IMR-90 (cell line): ENCODE measurements at regions of chr2 and their contacts with region 1.

Region 1: GRCh38 chr2:104236491-104236890 is 617.4 kb upstream of the POU3F3 start:
- DNase-seq: no peak
- ATAC-seq: no peak
- H3K4me3 ChIP-seq: no peak overlapping the region
- H3K27ac ChIP-seq: no peak overlapping the region
- H3K4me1 ChIP-seq: no peaks in the 10 kb centered on the region
- H3K27me3 ChIP-seq: no peaks in the 10 kb centered on the region
- CTCF ChIP-seq: no peak
- POLR2A ChIP-seq: no peak
- RAD21 ChIP-seq: no peak

Region 2: GRCh38 chr2:104200533-104201168 is 35.8 kb before region 1 on chr2:
- CTCF ChIA-PET with region 1: no interaction called
- POLR2A ChIA-PET with region 1: no interaction called
- dilution Hi-C with region 1: no loop called
- in situ Hi-C with region 1: no loop called
- intact Hi-C with region 1: loop called (anchors 1 kb)
- DNase-seq: no peak
- ATAC-seq: no peak
- H3K4me3 ChIP-seq: no peak overlapping the region
- H3K27ac ChIP-seq: no peak overlapping the region
- H3K4me1 ChIP-seq: no peaks in the 10 kb centered on the region
- H3K27me3 ChIP-seq: no peaks in the 10 kb centered on the region
- CTCF ChIP-seq: no peak
- POLR2A ChIP-seq: no peak
- RAD21 ChIP-seq: no peak

Region 3: GRCh38 chr2:104262714-104263113 is 26.2 kb after region 1 on chr2:
- CTCF ChIA-PET with region 1: no interaction called
- POLR2A ChIA-PET with region 1: no interaction called
- dilution Hi-C with region 1: no loop called
- in situ Hi-C with region 1: no loop called
- intact Hi-C with region 1: loop called (anchors 2 kb)
- DNase-seq: no peak
- ATAC-seq: no peak
- H3K4me3 ChIP-seq: no peak overlapping the region
- H3K27ac ChIP-seq: no peak overlapping the region
- H3K4me1 ChIP-seq: no peaks in the 10 kb centered on the region
- H3K27me3 ChIP-seq: no peaks in the 10 kb centered on the region
- CTCF ChIP-seq: no peak
- POLR2A ChIP-seq: no peak
- RAD21 ChIP-seq: no peak